ENCODE measurements at regions of chr16 and their contacts with region 1.

Region 1: GRCh38 chr16:88743693-88744576 is 37.6 kb downstream of the CTU2 start:
- DNase-seq: peak; percentile 81
- H3K4me3 ChIP-seq: no peak overlapping the region
- H3K27ac ChIP-seq: no peak overlapping the region
- H3K4me1 ChIP-seq: peaks cover 12% of the 10 kb centered on the region
- H3K27me3 ChIP-seq: no peaks in the 10 kb centered on the region
- CTCF ChIP-seq: peak; percentile 84 to 96 (median 87)
- POLR2A ChIP-seq: no peak

Region 2: DNA sequence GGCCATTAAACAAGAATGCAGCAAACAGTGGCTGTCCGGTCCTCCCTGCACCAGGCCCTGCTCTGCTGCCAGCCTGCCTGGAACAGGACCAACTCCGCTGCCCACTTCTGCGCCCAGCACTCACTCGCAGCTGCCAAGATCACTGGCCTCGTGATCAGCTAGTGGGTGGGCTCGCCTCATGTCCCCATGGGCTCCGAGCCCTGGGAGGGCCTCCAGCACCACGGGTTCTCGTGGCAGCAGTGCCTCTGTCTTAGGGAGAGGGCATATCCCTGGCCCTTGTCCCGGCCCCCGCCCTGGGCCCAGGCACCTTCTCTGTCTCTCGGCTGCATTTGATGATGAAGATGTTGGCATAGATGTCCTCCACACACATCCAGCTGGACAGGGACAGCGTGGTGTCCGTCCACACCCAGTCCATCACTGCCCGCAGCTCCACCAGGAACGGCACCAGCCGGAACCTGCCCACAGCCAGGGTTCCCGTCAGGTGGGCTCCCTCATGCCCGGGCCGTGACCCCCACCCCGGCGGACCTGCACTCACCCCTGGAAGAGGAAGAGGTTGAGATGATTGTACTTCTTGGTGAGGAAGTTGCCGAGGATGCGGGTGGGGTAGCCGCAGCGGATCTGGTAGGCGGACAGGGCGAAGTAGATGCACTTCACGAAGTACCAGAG is 24.5 kb before region 1 on chr16:
- intact Hi-C with region 1: no loop called
- DNase-seq: peak; percentile 76
- H3K4me3 ChIP-seq: no peak overlapping the region
- H3K27ac ChIP-seq: no peak overlapping the region
- H3K4me1 ChIP-seq: no peaks in the 10 kb centered on the region
- H3K27me3 ChIP-seq: no peaks in the 10 kb centered on the region
- CTCF ChIP-seq: no peak
- POLR2A ChIP-seq: no peak

Region 3: GRCh38 chr16:88784074-88784855 is 40.3 kb after region 1 on chr16:
- intact Hi-C with region 1: loop called (anchors 5 kb)
- DNase-seq: peak; percentile 62
- H3K4me3 ChIP-seq: peak overlapping the region; percentile 52 to 62
- H3K27ac ChIP-seq: peak overlapping the region; percentile 67 to 86
- H3K4me1 ChIP-seq: peaks cover 11% of the 10 kb centered on the region
- H3K27me3 ChIP-seq: no peaks in the 10 kb centered on the region
- CTCF ChIP-seq: peak in 2 of 3 experiments; percentile 50 to 55
- POLR2A ChIP-seq: no peak